Right cardiac atrium (tissue), 5 donors: ENCODE measurements at regions of chrX and their contacts with region 1.

Region 1: GRCh38 chrX:12974796-12975669 is at the start of gene TMSB4X:
- DNase-seq: peak; percentile 86 to 94 (median 92)
- ATAC-seq: peak; percentile 89 to 90
- H3K4me3 ChIP-seq: peak within 1 kb of the TSS; percentile 75
- H3K27ac ChIP-seq: peak within 1 kb of the TSS; percentile 95
- H3K4me1 ChIP-seq: no peaks in the 10 kb centered on the region
- H3K27me3 ChIP-seq: no peaks in the 10 kb centered on the region
- total RNA-seq, gene TMSB4X: 1,054 to 1,542 (median 1,304) TPM

Region 2: DNA sequence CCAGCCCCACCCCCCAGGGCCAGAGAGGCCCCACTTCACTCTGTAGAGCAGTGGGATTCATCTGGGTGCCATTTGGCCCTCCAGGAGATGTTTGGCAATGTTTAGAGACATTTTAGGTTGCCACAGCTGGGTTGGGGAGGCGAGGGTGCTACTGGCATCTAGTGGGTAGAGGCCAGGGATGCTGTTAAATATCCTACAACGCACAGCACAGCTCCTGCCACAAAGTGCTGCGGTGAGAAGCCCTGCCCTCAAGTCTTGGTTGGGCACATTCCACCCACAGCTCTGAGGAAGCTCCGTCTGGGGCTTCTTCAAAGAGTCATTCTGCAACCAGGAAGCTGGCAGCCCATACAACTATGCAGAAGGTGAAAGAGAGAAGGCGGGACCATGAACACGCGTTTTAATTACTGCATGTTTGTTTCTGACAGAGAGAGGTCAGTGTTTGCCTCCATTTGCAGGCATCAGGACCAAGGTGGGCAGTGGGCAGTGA is 117.5 kb after region 1 on chrX:
- intact Hi-C with region 1: loop called in 1 of 4 experiments (anchors 10 kb)
- DNase-seq: peak in 1 of 3 donors; percentile 48
- ATAC-seq: peak in 1 of 2 donors; percentile 56
- H3K4me3 ChIP-seq: no peak overlapping the region
- H3K27ac ChIP-seq: no peak overlapping the region
- H3K4me1 ChIP-seq: no peaks in the 10 kb centered on the region
- H3K27me3 ChIP-seq: no peaks in the 10 kb centered on the region

Region 3: DNA sequence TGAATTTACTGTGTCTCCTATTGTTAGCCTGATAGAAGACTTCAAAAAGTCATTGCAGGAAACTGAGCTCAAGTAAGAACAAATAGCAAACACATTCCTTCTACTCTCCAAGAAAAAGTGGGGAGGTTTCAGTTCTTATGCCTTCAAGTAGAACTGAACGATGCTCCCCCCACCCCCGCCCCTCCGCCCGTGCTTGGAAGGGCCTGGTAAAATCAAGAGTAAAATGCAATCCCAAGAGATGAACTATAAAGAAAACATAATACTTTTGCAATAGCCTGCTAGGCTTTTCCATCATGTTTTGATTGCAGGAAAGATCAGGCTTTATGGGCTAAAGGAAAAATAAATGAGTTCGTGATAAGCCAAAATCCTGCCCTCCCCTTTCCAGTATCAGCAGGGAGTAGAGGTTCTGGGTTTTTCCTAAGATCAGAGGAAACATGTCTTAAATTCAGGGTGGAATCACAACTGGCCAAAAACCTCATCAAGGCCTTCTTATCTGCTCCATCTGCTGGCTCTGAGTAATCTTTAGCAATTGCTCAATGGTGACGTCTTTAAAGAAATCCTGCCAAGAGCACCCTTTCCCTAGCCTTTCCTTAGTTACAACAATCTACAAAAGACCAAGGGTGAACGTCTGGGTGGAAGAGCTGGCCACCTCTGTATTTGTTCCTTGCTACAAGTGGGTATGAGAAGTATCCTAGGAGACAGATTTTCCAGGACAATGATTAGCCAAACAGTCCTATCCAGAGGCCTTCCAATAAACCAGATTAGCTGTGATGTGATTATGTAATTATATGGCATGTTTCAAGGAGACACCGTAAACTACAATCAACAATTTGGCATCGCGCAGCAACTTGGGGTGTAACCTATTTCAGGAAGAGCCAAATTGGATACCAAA is 135.6 kb after region 1 on chrX:
- intact Hi-C with region 1: loop called in 1 of 4 experiments (anchors 5 kb)
- DNase-seq: peak; percentile 53 to 76 (median 72)
- ATAC-seq: peak; percentile 92 to 97
- H3K4me3 ChIP-seq: no peak overlapping the region
- H3K27ac ChIP-seq: peak overlapping the region; percentile 58
- H3K4me1 ChIP-seq: no peaks in the 10 kb centered on the region
- H3K27me3 ChIP-seq: no peaks in the 10 kb centered on the region

Region 4: GRCh38 chrX:13487731-13488523 is 512.9 kb after region 1 on chrX:
- intact Hi-C with region 1: loop called in 3 of 4 experiments (anchors 5 to 10 kb)
- DNase-seq: peak in 1 of 3 donors; percentile 26
- ATAC-seq: peak; percentile 83 to 84
- H3K4me3 ChIP-seq: no peak overlapping the region
- H3K27ac ChIP-seq: peak overlapping the region; percentile 58
- H3K4me1 ChIP-seq: peaks cover 3% of the 10 kb centered on the region
- H3K27me3 ChIP-seq: no peaks in the 10 kb centered on the region